ENCODE measurements at regions of chr3 and their contacts with region 1.

Region 1: GRCh38 chr3:48465531-48466378 is 19.2 kb downstream of the ATRIP start:
- DNase-seq: peak; percentile 87
- ATAC-seq: peak; percentile 96
- H3K4me3 Mint-ChIP-seq: peak overlapping the region; percentile 96
- H3K27ac Mint-ChIP-seq: peak overlapping the region; percentile 97
- H3K4me1 Mint-ChIP-seq: peaks cover 57% of the 10 kb centered on the region
- H3K27me3 Mint-ChIP-seq: no peaks in the 10 kb centered on the region

Region 2: GRCh38 chr3:48334605-48335004 is 131.2 kb before region 1 on chr3:
- CTCF ChIA-PET with region 1: no interaction called
- POLR2A ChIA-PET with region 1: no interaction called
- DNase-seq: no peak
- ATAC-seq: no peak
- H3K4me3 Mint-ChIP-seq: no peak overlapping the region
- H3K27ac Mint-ChIP-seq: no peak overlapping the region
- H3K4me1 Mint-ChIP-seq: peaks cover 2% of the 10 kb centered on the region
- H3K27me3 Mint-ChIP-seq: peaks cover 21% of the 10 kb centered on the region

Region 3: DNA sequence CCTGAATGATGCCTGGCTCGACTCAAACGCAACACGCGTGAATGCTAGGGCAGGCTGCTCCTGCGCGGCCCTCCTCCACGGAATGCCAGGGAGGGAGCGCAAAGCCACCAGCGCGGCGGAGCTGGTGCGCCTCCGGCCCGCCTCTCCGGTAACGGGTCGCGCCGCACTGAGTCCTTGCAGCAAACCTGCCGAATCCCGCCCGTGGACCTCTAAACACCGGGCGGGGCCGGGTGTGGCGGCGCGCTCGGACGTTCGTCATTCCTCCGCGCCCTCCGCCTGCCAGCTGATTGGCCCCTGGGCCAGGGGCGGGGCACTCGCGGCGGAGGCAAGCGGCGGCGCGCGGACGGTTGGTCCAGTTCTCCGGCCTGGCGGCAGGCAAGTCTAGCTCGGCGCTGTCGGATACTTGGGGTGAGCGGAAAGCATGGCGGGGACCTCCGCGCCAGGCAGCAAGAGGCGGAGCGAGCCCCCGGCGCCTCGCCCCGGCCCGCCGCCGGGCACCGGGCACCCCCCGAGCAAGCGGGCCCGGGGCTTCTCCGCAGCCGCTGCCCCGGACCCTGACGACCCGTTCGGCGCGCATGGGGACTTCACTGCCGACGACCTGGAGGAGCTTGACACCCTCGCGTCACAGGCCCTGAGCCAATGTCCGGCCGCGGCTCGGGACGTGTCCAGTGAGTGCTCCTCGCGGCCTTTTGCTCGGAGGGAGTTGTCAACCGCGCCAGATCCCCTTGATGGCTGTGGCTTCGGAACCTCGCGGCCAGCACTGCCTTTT is 19.1 kb before region 1 on chr3 and contains the start of gene ATRIP:
- CTCF ChIA-PET with region 1: interaction called, 3 read pairs
- POLR2A ChIA-PET with region 1: interaction called, 31 read pairs
- DNase-seq: peak; percentile 89
- ATAC-seq: peak; percentile 97
- H3K4me3 Mint-ChIP-seq: peak within 1 kb of the TSS; percentile 84
- H3K27ac Mint-ChIP-seq: peak within 1 kb of the TSS; percentile 87
- H3K4me1 Mint-ChIP-seq: peaks cover 46% of the 10 kb centered on the region
- H3K27me3 Mint-ChIP-seq: no peaks in the 10 kb centered on the region
- total RNA-seq, gene ATRIP: 18.8 to 20.3 TPM

Region 4: DNA sequence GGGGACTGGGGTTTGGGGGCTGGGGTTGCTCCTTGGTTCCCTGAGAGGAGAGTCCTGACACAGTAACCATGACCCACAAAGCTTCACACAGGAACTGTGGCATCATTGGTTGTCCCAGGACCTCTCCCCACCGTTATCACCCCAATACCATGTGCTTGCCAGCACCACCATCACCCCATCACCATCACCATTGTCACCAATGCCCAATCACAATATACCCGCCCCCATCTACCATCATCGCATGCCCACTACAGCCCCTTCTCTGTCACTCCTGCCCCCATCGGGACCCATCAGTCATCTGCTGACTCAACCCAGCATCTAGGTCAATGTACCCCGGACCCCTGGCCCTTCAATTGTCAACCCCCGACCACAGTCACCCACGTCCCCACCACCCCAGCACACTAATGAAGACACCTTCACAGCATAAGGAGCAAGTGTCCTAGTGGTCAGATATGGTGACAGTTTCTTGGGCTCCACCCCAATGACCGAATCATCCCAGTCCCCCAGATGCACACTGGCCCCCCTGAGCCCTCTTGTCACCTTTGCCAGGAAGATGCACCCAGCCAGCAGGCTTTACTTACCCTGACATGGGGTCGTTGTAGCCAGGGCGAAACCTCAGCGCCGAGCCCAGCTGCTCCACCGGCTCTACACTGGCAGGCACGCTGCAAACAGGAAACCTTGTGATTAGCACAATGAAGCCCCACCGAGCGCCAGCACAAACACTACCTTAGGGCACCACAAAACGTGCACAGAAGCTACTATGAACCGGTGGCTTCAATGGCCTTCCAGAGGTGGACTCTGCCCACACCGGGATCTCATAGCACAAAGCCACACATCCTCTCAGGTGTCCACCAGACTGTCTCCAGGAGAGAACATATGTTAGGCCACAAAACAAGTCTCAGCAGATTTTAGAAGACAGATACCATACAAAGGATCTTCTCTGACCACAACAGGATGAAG is 13.1 kb after region 1 on chr3:
- CTCF ChIA-PET with region 1: interaction called, 3 read pairs
- POLR2A ChIA-PET with region 1: interaction called, 44 read pairs
- DNase-seq: peak; percentile 82
- ATAC-seq: peak; percentile 88
- H3K4me3 Mint-ChIP-seq: peak overlapping the region; percentile 83
- H3K27ac Mint-ChIP-seq: peak overlapping the region; percentile 100
- H3K4me1 Mint-ChIP-seq: peaks cover 56% of the 10 kb centered on the region
- H3K27me3 Mint-ChIP-seq: no peaks in the 10 kb centered on the region

Region 5: GRCh38 chr3:48507351-48508061 is 41.8 kb after region 1 on chr3:
- CTCF ChIA-PET with region 1: interaction called, 15 read pairs
- POLR2A ChIA-PET with region 1: interaction called, 22 read pairs
- DNase-seq: peak; percentile 86
- ATAC-seq: peak; percentile 87
- H3K4me3 Mint-ChIP-seq: no peak overlapping the region
- H3K27ac Mint-ChIP-seq: peak overlapping the region; percentile 81
- H3K4me1 Mint-ChIP-seq: peaks cover 53% of the 10 kb centered on the region
- H3K27me3 Mint-ChIP-seq: peaks cover 6% of the 10 kb centered on the region

Measured in activated CD8-positive, alpha-beta T cell treated with anti-CD3 and anti-CD28 coated beads, Interleukin-2, amount 10 ng/mL, durations not matched to agents 7 days and 5 days (primary cell).